ENCODE measurements at regions of chr11 and their contacts with region 1.

Region 1: DNA sequence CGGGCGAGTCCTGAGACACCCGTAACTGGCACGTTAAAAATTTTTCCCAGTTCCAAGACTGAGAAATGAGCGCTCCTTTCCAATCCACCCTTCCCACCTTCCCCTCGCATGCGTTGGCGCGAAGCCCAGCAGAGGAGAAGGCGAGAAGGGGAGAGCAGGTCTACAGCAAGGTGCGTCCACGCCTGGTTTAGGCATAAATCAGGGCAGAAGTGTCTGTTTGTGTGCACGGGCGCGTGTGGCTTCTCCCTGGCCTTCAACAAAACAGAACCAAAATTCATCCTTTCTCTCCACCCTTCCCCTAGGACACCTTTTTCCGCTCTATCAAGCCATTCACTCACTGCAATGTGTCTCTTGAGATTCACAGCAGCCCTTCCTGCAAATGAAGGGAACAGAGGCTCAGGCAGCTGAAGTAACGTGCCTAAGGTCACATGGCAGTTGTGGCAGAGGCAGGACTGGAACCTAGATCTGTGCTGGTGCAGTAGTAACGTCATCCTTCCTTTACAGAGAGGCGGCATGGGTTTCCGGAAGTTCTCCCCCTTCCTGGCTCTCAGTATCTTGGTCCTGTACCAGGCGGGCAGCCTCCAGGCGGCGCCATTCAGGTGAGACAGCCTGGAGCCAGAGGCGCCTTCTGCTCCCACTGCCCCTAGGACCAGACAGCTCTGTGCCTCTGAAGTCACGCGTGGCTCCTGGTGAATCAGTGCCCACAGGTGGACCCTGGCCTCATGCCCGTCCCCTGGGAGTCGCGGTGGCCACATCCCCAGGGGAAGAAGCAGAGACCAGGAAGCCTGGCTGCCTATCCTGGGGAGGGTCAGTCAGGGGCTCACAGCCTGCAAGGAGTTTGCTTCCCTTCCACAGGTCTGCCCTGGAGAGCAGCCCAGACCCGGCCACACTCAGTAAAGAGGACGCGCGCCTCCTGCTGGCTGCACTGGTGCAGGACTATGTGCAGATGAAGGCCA is 1.1 kb downstream of the CALCB start:
- DNase-seq: peak; percentile 81

Region 2: DNA sequence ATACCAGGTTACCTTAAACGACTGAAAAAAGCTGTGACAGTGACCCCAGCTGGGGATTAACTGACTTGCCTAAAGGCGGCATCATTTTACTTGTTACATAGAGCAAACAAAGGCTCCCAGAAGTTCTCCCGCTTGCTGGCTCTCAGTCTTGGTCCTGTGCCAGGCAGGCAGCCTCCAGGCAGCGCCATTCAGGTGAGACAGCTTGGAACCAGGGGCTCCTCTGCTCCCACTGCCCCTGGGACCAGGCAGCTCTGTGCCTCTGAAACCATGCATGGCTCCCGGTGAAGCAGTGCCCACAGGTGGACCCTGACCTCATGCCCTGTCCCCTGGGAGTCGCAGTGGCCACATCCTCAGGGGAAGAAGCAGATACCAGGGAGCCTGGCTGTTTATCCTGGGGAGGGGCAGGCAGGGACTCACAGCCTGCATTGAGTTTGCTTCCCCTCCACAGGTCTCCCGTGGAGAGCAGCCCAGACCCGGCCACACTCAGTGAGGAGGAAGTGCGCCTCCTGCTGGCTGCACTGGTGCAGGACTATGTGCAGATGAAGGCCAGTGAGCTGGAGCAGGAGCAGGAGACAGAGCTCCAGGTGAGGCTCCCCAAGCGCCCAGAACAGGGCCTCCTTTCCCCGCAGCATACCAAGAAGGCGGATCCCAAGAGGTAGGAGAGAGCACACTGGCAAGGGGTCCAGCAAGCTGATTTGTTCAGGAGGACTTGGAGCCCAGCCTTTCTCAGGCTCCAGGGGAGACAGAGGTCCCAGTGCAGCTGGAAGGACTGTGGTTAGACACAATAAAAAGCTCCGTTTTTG is 166.9 kb before region 1 on chr11:
- intact Hi-C with region 1: loop called (anchors 5 kb)
- DNase-seq: peak; percentile 89

Region 3: DNA sequence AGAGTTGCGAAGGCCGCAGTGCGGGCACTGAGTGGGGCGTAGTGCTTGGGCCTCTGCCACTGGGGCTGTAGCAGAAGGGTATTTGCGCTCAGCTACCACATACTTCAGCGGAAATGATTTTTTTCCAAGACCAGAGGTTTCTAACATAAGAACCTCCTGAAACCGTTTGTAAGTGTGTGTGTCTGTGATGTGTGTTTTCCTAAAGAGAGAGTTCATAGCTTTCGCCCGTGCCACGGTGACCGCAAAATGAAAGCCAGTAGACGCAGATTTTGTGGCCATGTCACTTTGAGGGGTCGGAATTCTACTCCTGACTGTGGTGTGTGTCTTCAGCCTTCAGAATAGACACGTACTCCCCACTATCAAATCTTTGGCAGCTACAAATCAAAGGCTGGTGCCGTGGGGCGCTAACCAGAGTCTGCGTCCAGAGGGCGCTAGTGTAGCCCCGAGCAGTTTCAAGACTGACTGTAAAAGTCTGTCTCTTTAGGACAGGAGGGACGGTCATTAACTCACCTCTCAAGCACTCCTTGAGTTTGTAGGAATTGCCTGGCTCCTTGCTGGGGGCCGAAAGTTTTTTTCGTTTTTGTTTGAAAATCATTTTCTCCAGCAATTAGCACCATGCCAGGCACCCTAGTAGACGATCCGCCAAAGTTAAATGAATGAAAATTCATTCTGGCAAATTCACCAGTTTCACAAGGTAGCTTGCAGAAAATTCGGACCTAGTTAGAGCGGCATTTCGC is 99.8 kb before region 1 on chr11:
- intact Hi-C with region 1: loop called (anchors 5 kb)
- DNase-seq: no peak